ENCODE measurements at regions of chr5 and their contacts with region 1.

Region 1: DNA sequence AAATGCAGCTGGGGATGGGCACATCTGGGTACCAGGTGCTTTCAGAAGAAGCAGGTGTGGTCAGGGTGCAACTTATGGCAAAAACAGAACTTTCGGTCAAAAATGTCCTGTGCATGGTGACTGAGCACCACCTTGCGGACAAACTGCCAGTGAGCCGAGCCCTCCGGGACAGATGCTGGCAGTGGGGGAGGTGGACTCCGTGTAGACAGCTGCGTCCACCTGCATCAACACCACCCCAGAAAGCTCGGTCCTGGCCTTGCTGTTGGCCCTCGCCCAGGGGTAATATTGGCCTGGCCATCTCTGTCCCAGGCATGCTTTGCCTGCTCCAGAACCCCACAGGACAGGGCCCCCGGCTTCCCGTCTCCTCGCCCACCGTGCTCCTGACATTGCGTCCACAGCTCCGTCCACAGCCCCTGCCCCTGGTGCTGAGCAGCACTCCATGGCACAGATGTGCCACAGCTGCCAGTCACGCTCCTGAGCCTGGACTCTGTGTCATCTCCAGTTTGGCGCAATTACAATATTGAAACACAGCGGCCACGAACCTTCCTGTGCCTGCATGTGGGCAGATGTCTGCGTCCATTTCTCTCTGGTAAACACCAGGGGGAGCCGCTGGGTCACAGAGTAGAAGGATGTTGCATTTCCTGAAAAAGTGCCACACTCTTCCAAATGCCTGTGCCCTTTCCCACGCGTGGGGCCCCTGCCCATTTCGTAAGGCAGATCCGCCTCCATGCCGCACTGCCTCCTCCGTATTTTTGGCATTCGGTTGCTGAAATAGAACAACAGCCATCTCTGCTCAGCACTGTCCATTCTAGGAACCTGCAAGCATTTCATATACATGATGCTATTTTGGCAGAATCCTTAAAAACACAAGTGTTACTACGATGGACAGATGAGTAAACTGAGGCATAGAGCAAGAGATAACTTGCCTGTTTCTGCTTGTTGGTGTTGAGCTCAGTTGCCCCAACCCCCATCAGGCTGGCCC is 33.4 kb upstream of the SLC6A19 start:
- DNase-seq: peak; percentile 65
- ATAC-seq: peak; percentile 87
- H3K4me3 ChIP-seq: peak overlapping the region in 2 of 3 experiments; percentile 10 to 49; a peak in 1 of 6 replicates
- H3K27ac ChIP-seq: no peak overlapping the region
- H3K4me1 ChIP-seq: peaks cover 43% of the 10 kb centered on the region
- H3K27me3 ChIP-seq: peaks cover 5 to 39% of the 10 kb centered on the region in 2 experiments; a peak in 4 of 5 replicates
- CTCF ChIP-seq: peak; percentile 85
- EP300 ChIP-seq: no peak
- POLR2A ChIP-seq: no peak
- RAD21 ChIP-seq: peak; percentile 92

Region 2: DNA sequence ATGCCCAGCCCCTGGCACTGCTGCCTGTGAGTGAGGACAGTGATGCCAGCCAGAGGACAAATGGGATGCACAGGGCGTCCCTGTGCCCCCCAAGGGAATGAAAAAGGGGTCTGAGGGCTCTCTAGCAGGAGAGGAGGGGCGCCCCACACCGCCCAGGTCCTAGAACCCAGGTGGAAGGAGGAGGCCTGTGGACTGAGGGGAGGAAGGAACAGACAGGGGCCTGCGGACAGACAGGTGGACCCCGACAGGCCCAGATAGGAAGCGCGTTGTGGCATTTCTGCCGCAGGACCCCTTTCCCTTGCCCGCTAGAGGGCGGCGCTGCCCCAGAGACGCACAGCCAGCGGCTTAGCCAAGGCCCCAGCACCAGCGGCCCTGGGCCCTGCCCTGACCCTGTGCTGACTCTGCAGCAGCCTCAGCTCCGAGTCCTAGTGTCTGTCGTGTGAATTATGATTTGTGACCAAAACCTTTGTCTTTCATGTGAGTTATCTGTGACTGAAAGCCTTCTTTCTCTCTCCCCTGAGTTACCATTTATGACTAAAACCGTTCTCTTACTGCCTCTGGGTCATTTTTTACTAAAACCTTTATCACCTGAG is 244.6 kb before region 1 on chr5:
- CTCF ChIA-PET with region 1: interaction called, 9 read pairs
- POLR2A ChIA-PET with region 1: interaction called, 3 read pairs
- in situ Hi-C with region 1: loop called (anchors 10 kb)
- intact Hi-C with region 1: loop called (anchors 5 kb)
- DNase-seq: peak; percentile 66
- ATAC-seq: peak; percentile 95
- H3K4me3 ChIP-seq: no peak overlapping the region
- H3K27ac ChIP-seq: no peak overlapping the region
- H3K4me1 ChIP-seq: peaks cover 22% of the 10 kb centered on the region
- H3K27me3 ChIP-seq: no peaks in the 10 kb centered on the region
- CTCF ChIP-seq: peak; percentile 98
- EP300 ChIP-seq: no peak
- POLR2A ChIP-seq: no peak
- RAD21 ChIP-seq: peak; percentile 98

Region 3: GRCh38 chr5:1004461-1005248 is 163.4 kb before region 1 on chr5:
- CTCF ChIA-PET with region 1: no interaction called
- POLR2A ChIA-PET with region 1: no interaction called
- in situ Hi-C with region 1: no loop called
- intact Hi-C with region 1: loop called (anchors 5 kb)
- DNase-seq: no peak
- ATAC-seq: peak; percentile 46
- H3K4me3 ChIP-seq: peak overlapping the region; percentile 34 to 67 (median 40); a peak in 5 of 6 replicates
- H3K27ac ChIP-seq: no peak overlapping the region
- H3K4me1 ChIP-seq: peaks cover 43% of the 10 kb centered on the region
- H3K27me3 ChIP-seq: peaks cover 9 to 80% of the 10 kb centered on the region in 2 experiments
- CTCF ChIP-seq: peak; percentile 76
- EP300 ChIP-seq: no peak
- POLR2A ChIP-seq: no peak
- RAD21 ChIP-seq: no peak

Region 4: GRCh38 chr5:1140171-1140817 is 27.7 kb before region 1 on chr5:
- CTCF ChIA-PET with region 1: interaction called, 3 read pairs
- POLR2A ChIA-PET with region 1: interaction called, 24 read pairs
- in situ Hi-C with region 1: no loop called
- intact Hi-C with region 1: loop called (anchors 2 kb)
- DNase-seq: peak; percentile 54
- ATAC-seq: peak; percentile 58
- H3K4me3 ChIP-seq: peak overlapping the region in 1 of 3 experiments; percentile 31; a peak in 1 of 6 replicates
- H3K27ac ChIP-seq: no peak overlapping the region
- H3K4me1 ChIP-seq: peaks cover 67% of the 10 kb centered on the region
- H3K27me3 ChIP-seq: peaks cover 3 to 41% of the 10 kb centered on the region in 2 experiments; a peak in 4 of 5 replicates
- CTCF ChIP-seq: peak; percentile 99
- EP300 ChIP-seq: no peak
- POLR2A ChIP-seq: no peak
- RAD21 ChIP-seq: peak; percentile 95

Region 5: DNA sequence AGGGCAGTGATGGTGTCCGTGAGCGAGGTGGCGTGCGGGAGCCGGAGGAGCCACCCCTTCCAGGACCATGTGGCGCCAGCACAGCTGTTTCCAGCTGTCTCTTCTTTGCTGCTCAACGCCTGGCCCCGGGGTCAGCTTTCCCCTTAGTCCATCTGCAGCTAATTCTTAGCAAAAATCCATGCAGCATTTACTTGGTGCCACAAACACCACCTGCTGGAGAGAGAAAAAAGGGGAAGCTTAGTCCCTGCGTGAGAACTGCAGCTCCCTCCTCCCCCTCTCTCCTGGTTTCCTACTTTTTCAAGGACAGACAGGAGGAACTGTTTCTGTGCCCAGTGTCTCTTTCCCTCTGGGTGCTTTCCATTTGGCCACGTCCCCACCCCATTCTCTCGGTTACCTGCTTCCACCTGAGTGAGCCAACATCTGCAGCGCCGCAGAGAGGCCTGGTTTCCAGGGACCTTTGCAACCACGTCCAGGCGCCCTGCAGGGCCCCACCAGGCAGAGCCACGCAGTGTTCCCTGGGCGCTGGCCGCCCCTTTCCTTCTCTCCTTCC is 36.7 kb after region 1 on chr5:
- CTCF ChIA-PET with region 1: interaction called, 24 read pairs
- POLR2A ChIA-PET with region 1: interaction called, 7 read pairs
- in situ Hi-C with region 1: no loop called
- intact Hi-C with region 1: loop called (anchors 1 kb)
- DNase-seq: peak; percentile 71
- ATAC-seq: peak; percentile 74
- H3K4me3 ChIP-seq: peak overlapping the region in 2 of 3 experiments; percentile 24 to 58; a peak in 3 of 6 replicates
- H3K27ac ChIP-seq: no peak overlapping the region
- H3K4me1 ChIP-seq: peaks cover 31% of the 10 kb centered on the region
- H3K27me3 ChIP-seq: peaks cover 17 to 82% of the 10 kb centered on the region in 2 experiments
- CTCF ChIP-seq: peak; percentile 80
- EP300 ChIP-seq: no peak
- POLR2A ChIP-seq: no peak
- RAD21 ChIP-seq: peak; percentile 73; the same call in 1 of the 2 replicates

Region 6: GRCh38 chr5:1217596-1218206 is 49.7 kb after region 1 on chr5:
- CTCF ChIA-PET with region 1: no interaction called
- POLR2A ChIA-PET with region 1: no interaction called
- in situ Hi-C with region 1: no loop called
- intact Hi-C with region 1: no loop called
- DNase-seq: no peak
- ATAC-seq: no peak
- H3K4me3 ChIP-seq: no peak overlapping the region
- H3K27ac ChIP-seq: no peak overlapping the region
- H3K4me1 ChIP-seq: no peaks in the 10 kb centered on the region
- H3K27me3 ChIP-seq: peaks cover 7 to 35% of the 10 kb centered on the region in 2 experiments; a peak in 4 of 5 replicates
- CTCF ChIP-seq: no peak
- EP300 ChIP-seq: no peak
- POLR2A ChIP-seq: no peak
- RAD21 ChIP-seq: no peak

Region 7: GRCh38 chr5:1235379-1235778 is 67.4 kb after region 1 on chr5:
- CTCF ChIA-PET with region 1: interaction called, 14 read pairs
- POLR2A ChIA-PET with region 1: no interaction called
- in situ Hi-C with region 1: loop called (anchors 5 kb)
- intact Hi-C with region 1: loop called (anchors 1 kb)
- DNase-seq: peak; percentile 48
- ATAC-seq: peak; percentile 88
- H3K4me3 ChIP-seq: no peak overlapping the region
- H3K27ac ChIP-seq: no peak overlapping the region
- H3K4me1 ChIP-seq: peaks cover 8% of the 10 kb centered on the region; the same call in 1 of the 2 replicates
- H3K27me3 ChIP-seq: peaks cover 16 to 62% of the 10 kb centered on the region in 2 experiments
- CTCF ChIP-seq: peak; percentile 88
- EP300 ChIP-seq: no peak
- POLR2A ChIP-seq: no peak
- RAD21 ChIP-seq: peak; percentile 66